ENCODE measurements at regions of chr17 and their contacts with region 1.

Region 1: GRCh38 chr17:40086150-40087044 is 14.0 kb downstream of the NR1D1 start:
- DNase-seq: peak; percentile 67
- H3K4me3 Mint-ChIP-seq: no peak overlapping the region
- H3K27ac Mint-ChIP-seq: no peak overlapping the region
- H3K4me1 Mint-ChIP-seq: no peaks in the 10 kb centered on the region
- H3K27me3 Mint-ChIP-seq: no peaks in the 10 kb centered on the region

Region 2: GRCh38 chr17:40018211-40019121 is 67.9 kb before region 1 on chr17:
- CTCF ChIA-PET with region 1: interaction called, 20 read pairs
- intact Hi-C with region 1: loop called (anchors 1 kb)
- DNase-seq: no peak
- H3K4me3 Mint-ChIP-seq: no peak overlapping the region
- H3K27ac Mint-ChIP-seq: no peak overlapping the region
- H3K4me1 Mint-ChIP-seq: peaks cover 4% of the 10 kb centered on the region
- H3K27me3 Mint-ChIP-seq: no peaks in the 10 kb centered on the region

Region 3: DNA sequence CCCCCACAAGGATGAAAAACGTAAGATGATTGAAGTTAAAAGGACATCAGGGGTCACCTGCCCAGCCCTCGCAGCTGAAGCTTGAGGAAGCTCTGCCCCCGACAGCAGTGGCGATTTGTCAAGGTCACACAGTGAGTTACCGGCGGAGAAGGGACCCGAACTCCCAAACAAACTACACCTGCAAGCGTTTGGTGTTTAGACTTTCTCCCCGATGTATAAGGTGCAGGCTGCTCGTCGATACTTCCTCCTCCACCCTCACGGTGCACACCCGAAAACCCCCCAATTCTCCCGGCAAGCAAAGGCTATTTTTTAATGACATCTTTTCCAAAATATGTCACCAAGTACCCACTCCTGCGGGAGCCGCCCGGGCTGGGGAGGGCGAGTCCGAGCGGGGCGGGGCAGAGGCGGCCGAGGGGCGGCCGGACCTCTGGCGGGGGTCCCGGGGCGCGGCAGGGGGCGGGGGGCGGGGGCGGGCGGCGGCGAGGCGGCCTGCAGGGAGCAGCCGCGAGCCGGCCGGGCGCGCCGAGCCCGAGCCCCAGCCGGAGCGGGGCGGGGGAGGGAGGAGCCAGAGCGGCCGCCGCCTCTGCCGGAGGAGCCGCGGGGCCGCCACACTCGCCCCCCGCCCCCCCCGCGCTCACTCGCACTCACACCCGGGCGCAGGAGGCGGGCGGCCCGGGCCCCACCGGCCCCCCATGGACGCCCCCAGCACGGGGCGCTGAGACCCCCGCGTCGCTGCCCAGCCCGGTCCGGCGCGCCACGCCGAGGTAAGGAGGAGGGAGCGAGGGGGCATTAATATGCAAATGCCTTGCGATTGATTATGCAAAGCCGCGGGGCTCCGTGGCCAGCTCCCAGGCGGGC is 23.8 kb before region 1 on chr17 and contains the start of gene THRA:
- CTCF ChIA-PET with region 1: interaction called, 26 read pairs
- intact Hi-C with region 1: loop called (anchors 2 kb)
- DNase-seq: peak; percentile 69
- H3K4me3 Mint-ChIP-seq: peak within 1 kb of the TSS; percentile 77
- H3K27ac Mint-ChIP-seq: no peak within 1 kb of the TSS
- H3K4me1 Mint-ChIP-seq: peaks cover 44% of the 10 kb centered on the region
- H3K27me3 Mint-ChIP-seq: peaks cover 2% of the 10 kb centered on the region
- total RNA-seq, gene THRA: 10.2 to 11.2 TPM

Region 4: DNA sequence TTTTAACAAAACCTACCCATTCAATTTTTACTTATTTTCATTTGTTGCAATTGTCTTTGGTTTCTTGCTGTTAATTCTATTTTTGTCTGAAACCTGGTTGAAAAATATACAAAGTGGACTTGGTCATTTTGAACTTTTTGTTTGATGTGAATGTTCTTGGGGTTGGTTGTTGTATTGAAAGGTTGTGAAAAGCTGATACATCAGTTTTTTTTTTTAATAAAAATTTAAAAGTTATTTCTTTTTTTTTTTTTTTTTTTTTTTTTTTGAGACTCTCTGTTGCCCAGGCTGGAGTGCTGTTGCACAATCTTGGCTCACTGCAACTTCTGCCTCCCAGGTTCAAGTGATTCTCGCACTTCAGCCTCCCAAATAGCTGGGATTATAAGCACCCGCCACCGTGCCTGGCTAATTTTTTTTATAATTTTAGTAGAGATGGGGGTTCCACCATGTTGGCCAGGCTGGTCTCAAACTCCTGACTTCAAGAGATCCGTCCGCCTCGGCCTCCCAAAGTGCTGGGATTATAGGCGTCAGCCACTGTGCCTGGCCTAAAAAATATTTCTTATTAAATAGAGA is 161.6 kb after region 1 on chr17:
- CTCF ChIA-PET with region 1: no interaction called
- intact Hi-C with region 1: no loop called
- DNase-seq: no peak
- H3K4me3 Mint-ChIP-seq: no peak overlapping the region
- H3K27ac Mint-ChIP-seq: no peak overlapping the region
- H3K4me1 Mint-ChIP-seq: peaks cover 32% of the 10 kb centered on the region
- H3K27me3 Mint-ChIP-seq: no peaks in the 10 kb centered on the region

Region 5: DNA sequence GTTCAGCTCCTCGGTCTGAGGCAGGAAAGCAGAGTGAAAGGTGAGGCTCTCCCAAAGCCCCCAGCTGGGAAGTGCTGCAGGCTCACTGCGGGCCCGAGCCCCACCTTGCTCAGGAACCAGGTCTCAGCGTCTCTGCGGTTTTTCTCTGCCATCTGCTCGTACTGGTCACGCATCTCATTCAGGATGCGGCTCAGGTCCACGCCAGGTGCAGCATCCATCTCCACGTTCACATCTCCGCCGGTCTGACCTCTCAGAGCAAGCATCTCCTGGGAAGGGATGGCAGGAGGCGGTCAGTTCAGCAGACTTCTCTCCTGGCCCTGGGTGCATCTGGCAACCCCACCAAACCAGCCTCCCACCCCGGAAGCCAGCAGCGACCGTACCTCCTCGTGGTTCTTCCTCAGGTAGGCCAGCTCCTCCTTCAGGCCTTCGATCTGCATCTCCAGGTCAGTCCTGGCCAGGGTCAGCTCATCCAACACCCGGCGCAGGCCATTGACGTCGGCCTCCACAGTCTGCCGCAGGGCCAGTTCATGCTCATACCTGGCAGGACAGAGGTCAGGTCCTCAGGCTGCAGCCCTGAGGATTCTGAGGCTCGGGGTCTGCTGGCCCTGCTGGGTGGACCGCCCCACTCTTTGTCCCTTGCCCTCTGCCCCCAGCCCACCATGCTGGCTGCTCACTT is 1524.7 kb after region 1 on chr17:
- CTCF ChIA-PET with region 1: no interaction called
- intact Hi-C with region 1: no loop called
- DNase-seq: no peak
- H3K4me3 Mint-ChIP-seq: no peak overlapping the region
- H3K27ac Mint-ChIP-seq: no peak overlapping the region
- H3K4me1 Mint-ChIP-seq: no peaks in the 10 kb centered on the region
- H3K27me3 Mint-ChIP-seq: peaks cover 19% of the 10 kb centered on the region